ENCODE measurements at regions of chr1 and their contacts with region 1.

Region 1: GRCh38 chr1:9004700-9005394 is 21.4 kb downstream of the SLC2A7 start:
- DNase-seq: peak; percentile 91
- ATAC-seq: peak; percentile 66
- H3K4me3 Mint-ChIP-seq: no peak overlapping the region
- H3K27ac Mint-ChIP-seq: no peak overlapping the region
- H3K4me1 Mint-ChIP-seq: peaks cover 9% of the 10 kb centered on the region
- H3K27me3 Mint-ChIP-seq: no peaks in the 10 kb centered on the region
- CTCF ChIP-seq: peak; percentile 96

Region 2: GRCh38 chr1:8858888-8859706 is 145.8 kb before region 1 on chr1:
- CTCF ChIA-PET with region 1: interaction called, 69 read pairs
- POLR2A ChIA-PET with region 1: no interaction called
- DNase-seq: peak; percentile 47
- ATAC-seq: peak; percentile 14
- H3K4me3 Mint-ChIP-seq: no peak overlapping the region
- H3K27ac Mint-ChIP-seq: peak overlapping the region; percentile 94
- H3K4me1 Mint-ChIP-seq: peaks cover 27% of the 10 kb centered on the region
- H3K27me3 Mint-ChIP-seq: no peaks in the 10 kb centered on the region; the same call in 1 of the 2 replicates
- CTCF ChIP-seq: peak; percentile 30; the same call in 1 of the 2 replicates

Region 3: GRCh38 chr1:8925406-8925805 is 79.4 kb before region 1 on chr1:
- CTCF ChIA-PET with region 1: interaction called, 78 read pairs
- POLR2A ChIA-PET with region 1: interaction called, 3 read pairs
- DNase-seq: no peak
- ATAC-seq: no peak
- H3K4me3 Mint-ChIP-seq: no peak overlapping the region
- H3K27ac Mint-ChIP-seq: no peak overlapping the region
- H3K4me1 Mint-ChIP-seq: no peaks in the 10 kb centered on the region
- H3K27me3 Mint-ChIP-seq: no peaks in the 10 kb centered on the region
- CTCF ChIP-seq: no peak

Region 4: GRCh38 chr1:8987881-8988617 is 16.8 kb before region 1 on chr1:
- CTCF ChIA-PET with region 1: interaction called, 50 read pairs
- POLR2A ChIA-PET with region 1: no interaction called
- DNase-seq: peak; percentile 81
- ATAC-seq: peak; percentile 92
- H3K4me3 Mint-ChIP-seq: no peak overlapping the region
- H3K27ac Mint-ChIP-seq: peak overlapping the region; percentile 57; the same call in 1 of the 2 replicates
- H3K4me1 Mint-ChIP-seq: 0 out of 2 replicates have a peak, but pooled peaks cover 2% of the 10 kb centered on the region
- H3K27me3 Mint-ChIP-seq: no peaks in the 10 kb centered on the region
- CTCF ChIP-seq: peak; percentile 82

Region 5: GRCh38 chr1:9058465-9058864 is 53.6 kb after region 1 on chr1:
- CTCF ChIA-PET with region 1: interaction called, 12 read pairs
- POLR2A ChIA-PET with region 1: no interaction called
- DNase-seq: no peak
- ATAC-seq: no peak
- H3K4me3 Mint-ChIP-seq: no peak overlapping the region
- H3K27ac Mint-ChIP-seq: no peak overlapping the region
- H3K4me1 Mint-ChIP-seq: 0 out of 2 replicates have a peak, but pooled peaks cover 2% of the 10 kb centered on the region
- H3K27me3 Mint-ChIP-seq: no peaks in the 10 kb centered on the region
- CTCF ChIP-seq: no peak

Region 6: GRCh38 chr1:9234223-9235095 is 229.6 kb after region 1 on chr1 and contains the start of gene H6PD:
- CTCF ChIA-PET with region 1: interaction called, 14 read pairs
- POLR2A ChIA-PET with region 1: no interaction called
- DNase-seq: peak; percentile 76
- ATAC-seq: peak; percentile 82
- H3K4me3 Mint-ChIP-seq: peak within 1 kb of the TSS; percentile 85
- H3K27ac Mint-ChIP-seq: peak within 1 kb of the TSS; percentile 72
- H3K4me1 Mint-ChIP-seq: peaks cover 15% of the 10 kb centered on the region
- H3K27me3 Mint-ChIP-seq: peaks cover 2% of the 10 kb centered on the region; the same call in 1 of the 2 replicates
- CTCF ChIP-seq: no peak
- total RNA-seq, gene H6PD: 7.4 to 7.9 TPM (median 7.8 TPM) in 3 replicates